ENCODE measurements at regions of chr15 and their contacts with region 1.

Region 1: DNA sequence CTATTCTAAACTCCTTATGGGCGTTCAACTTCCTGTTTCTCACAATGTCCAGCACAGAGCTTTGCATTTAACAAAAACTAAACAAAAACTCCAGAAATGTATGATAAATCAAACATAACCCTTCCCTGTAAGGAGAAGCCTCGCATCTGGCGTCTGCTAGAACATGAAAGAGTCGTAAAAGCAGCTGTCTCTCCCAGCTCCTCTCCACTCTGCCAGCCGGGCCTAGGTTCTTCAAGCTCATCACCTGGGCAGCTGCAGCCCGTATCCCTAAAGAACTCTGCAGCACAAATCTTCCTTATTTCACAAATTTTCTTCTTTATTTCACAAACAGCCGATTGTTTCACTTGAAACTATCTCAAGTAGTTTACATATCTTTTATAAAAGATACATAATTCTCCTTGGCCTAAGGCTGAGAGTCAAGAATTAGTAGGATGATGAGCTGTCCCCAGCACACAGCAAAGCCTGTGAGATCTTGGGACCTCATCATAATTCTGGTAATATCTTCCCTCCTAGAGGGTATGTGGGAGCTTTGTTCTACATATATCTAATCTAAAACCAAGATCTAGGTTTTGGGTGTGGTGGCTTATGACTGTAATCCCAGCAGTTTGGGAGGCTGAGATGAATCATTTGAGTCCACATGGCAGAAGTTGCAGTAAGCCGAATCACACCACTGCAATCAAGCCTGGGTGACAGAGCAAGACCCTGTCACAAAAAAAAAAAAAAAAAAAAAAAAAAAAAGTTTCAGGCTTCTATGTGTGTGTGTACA is 35.3 kb downstream of the ANXA2 start:
- DNase-seq: no peak
- ATAC-seq: peak; percentile 42

Region 2: GRCh38 chr15:60138397-60138968 is 224.0 kb before region 1 on chr15:
- intact Hi-C with region 1: no loop called
- DNase-seq: no peak
- ATAC-seq: no peak

Region 3: GRCh38 chr15:60397772-60398445 is 35.4 kb after region 1 on chr15 and contains the start of gene ANXA2:
- intact Hi-C with region 1: loop called (anchors 2 kb)
- DNase-seq: peak; percentile 90
- ATAC-seq: peak; percentile 88
- total RNA-seq, gene ANXA2: 212 TPM

Region 4: DNA sequence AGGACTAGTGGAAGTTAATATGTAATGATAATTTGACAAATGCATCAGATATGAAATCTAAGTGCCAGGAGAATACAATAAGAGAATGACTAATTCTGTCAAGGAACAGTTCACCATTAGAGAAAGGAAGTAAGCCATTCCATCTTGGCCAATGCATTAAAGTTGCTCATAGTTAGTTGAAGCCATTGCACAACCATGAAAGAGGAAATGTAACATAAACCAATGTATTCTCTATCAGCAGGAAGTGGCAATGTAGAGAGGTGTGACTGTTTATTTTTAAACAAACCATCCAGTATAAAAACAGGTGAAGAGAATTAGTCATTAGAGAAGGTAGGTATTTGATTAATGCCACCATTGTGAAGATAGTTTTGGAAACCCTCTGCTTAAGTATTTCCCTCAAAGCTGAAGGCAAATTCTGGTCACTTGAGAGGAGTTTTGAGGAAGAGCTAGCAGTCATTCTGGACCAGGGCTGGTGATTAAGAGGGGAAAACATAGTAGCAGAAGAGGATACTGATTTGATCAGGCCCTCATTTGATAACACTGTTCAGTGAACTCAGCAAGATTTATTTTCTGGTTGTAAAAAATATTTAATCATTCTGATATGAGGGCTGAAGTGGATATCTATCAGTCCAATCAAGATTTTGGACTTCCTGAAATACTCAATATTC is 46.1 kb after region 1 on chr15:
- intact Hi-C with region 1: no loop called
- DNase-seq: no peak
- ATAC-seq: no peak

Region 5: DNA sequence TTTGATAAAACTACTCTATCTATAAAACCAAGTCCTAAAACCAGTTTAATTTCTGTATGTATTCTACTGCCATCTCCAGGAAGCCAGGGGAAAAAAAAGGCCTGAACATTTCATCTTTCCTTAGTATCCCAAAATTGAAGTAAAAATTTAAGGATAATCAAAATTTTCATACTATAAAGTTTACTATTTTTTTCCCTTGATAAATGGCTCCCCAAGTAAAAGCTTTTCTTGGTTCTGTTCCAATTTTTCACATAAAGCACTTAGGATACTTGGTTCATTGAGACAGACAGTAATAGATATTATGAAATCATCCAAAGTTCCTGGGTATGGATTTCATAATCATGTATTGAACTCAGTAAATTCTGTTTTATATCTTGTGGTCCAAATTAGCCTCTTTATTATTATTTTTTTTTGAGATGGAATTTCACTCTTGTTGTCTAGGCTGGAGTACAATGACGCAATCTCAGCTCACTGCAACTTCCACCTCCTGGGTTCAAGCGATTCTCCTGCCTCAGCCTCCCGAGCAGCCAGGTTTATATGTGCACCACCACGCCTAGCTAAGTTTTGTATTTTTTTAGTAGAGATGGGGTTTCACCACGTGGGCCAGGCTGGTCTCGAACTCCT is 81.9 kb after region 1 on chr15:
- intact Hi-C with region 1: loop called (anchors 1 kb)
- DNase-seq: no peak
- ATAC-seq: no peak

Region 6: DNA sequence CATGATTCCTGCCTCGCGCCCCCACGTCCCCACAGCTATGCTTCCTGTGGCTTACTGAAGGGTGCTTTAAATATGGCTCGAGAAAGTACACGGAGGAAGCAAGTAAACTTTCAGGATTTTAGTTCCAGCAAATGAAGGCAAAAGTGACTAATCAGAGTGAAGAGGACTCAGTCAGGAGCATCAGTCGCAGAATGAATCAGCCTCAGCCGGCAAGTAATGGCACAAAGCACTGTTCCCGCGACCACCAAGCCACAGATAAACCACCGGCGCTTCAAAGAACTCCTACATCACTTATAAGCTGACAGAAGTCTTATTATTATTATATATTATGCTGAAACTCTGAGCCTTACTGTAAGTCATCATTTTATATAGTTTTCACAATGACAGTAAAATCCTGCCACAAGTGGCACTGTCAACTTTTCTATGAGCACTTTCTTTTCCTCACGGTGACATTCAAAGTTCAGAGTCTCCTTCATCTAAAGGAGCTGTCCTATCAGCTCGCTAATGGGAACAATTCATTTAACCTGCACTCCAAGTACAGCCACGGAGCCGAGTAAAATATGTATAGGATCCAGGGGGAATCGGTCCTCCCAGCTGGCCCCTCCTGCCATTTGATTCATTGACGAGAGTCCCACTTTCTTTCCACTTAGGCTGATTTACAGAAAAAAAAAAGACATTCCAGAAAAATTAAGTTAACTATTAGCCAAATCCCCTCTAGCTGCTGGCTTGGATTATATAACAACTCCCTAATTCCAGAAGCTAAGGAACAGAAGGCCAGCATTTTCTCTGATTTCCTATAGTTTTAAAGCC is 333.4 kb after region 1 on chr15:
- intact Hi-C with region 1: no loop called
- DNase-seq: no peak
- ATAC-seq: no peak

Region 7: GRCh38 chr15:61834076-61834697 is 1471.7 kb after region 1 on chr15:
- intact Hi-C with region 1: loop called (anchors 5 kb)
- DNase-seq: peak; percentile 85
- ATAC-seq: peak; percentile 79